ENCODE measurements at regions of chr2 and their contacts with region 1.

Region 1: DNA sequence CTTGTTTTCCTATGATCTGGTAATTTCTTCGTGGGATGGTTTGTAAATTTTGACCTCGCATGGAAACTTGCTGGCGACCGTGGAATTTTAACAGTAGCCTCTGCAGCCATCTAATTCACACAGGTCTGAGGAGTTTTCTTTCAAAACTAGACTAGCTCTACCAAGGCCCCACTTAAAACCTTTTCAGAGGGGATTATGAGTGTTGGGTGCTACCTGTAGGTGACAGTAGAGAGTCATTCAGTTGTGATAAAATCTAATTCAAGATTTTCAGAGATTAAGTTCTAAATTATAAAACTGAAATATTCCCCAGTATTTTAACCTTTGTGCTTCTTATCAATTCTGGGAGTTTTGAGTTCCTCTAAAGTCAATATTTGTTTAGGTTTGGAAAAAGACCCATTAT is 31.0 kb downstream of the THSD7B start:
- DNase-seq: no peak
- H3K4me3 ChIP-seq: no peak overlapping the region
- CTCF ChIP-seq: no peak
- POLR2A ChIP-seq: no peak

Region 2: GRCh38 chr2:137123226-137123625 is 326.9 kb after region 1 on chr2:
- intact Hi-C with region 1: loop called (anchors 10 kb)
- DNase-seq: no peak
- H3K4me3 ChIP-seq: no peak overlapping the region
- CTCF ChIP-seq: no peak
- POLR2A ChIP-seq: no peak

Region 3: GRCh38 chr2:138516030-138516704 is 1719.8 kb after region 1 on chr2:
- intact Hi-C with region 1: no loop called
- DNase-seq: no peak
- H3K4me3 ChIP-seq: no peak overlapping the region
- CTCF ChIP-seq: no peak
- POLR2A ChIP-seq: no peak